Activated naive CD4-positive, alpha-beta T cell treated with anti-CD3 and anti-CD28 coated beads for 36 hours (primary cell): ENCODE measurements at regions of chr2 and their contacts with region 1.

Region 1: GRCh38 chr2:44668336-44668735 is 273.2 kb upstream of the SIX3 start:
- DNase-seq: no peak
- H3K4me3 Mint-ChIP-seq: no peak overlapping the region
- H3K27ac Mint-ChIP-seq: no peak overlapping the region
- H3K4me1 Mint-ChIP-seq: no peaks in the 10 kb centered on the region
- H3K27me3 Mint-ChIP-seq: no peaks in the 10 kb centered on the region

Region 2: GRCh38 chr2:44560352-44560751 is 108.0 kb before region 1 on chr2:
- CTCF ChIA-PET with region 1: interaction called, 6 read pairs
- intact Hi-C with region 1: loop called (anchors 1 kb)
- DNase-seq: peak; percentile 51
- H3K4me3 Mint-ChIP-seq: no peak overlapping the region
- H3K27ac Mint-ChIP-seq: no peak overlapping the region
- H3K4me1 Mint-ChIP-seq: no peaks in the 10 kb centered on the region
- H3K27me3 Mint-ChIP-seq: no peaks in the 10 kb centered on the region

Region 3: DNA sequence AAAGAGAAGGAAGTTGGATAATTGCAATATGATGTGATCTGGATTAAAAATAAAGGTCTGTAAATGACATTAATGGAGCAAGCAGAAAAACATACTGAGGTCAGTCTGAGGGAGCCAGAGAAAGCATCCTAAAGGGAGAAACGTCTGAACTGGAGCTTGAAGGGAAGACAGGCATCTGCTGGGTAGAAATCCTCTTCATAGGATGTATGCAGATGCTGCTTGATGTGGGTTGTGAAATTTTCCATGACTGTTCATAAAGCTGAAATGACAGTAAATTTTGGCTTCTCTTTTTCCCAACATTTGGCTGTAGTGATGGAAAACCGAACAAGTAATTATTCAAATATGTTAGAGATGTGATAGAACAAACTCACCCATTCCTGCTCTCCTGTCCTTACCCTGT is 19.0 kb before region 1 on chr2:
- CTCF ChIA-PET with region 1: no interaction called
- intact Hi-C with region 1: no loop called
- DNase-seq: no peak
- H3K4me3 Mint-ChIP-seq: no peak overlapping the region
- H3K27ac Mint-ChIP-seq: no peak overlapping the region
- H3K4me1 Mint-ChIP-seq: no peaks in the 10 kb centered on the region
- H3K27me3 Mint-ChIP-seq: no peaks in the 10 kb centered on the region

Region 4: GRCh38 chr2:44740678-44741077 is 72.3 kb after region 1 on chr2:
- CTCF ChIA-PET with region 1: no interaction called
- intact Hi-C with region 1: no loop called
- DNase-seq: no peak
- H3K4me3 Mint-ChIP-seq: no peak overlapping the region
- H3K27ac Mint-ChIP-seq: no peak overlapping the region
- H3K4me1 Mint-ChIP-seq: no peaks in the 10 kb centered on the region
- H3K27me3 Mint-ChIP-seq: no peaks in the 10 kb centered on the region